Activated CD8-positive, alpha-beta T cell treated with anti-CD3 and anti-CD28 coated beads, Interleukin-2, amount 10 ng/mL, durations not matched to agents 7 days and 5 days (primary cell): ENCODE measurements at regions of chr1 and their contacts with region 1.

Region 1: GRCh38 chr1:77779529-77780281 is at the start of gene MIGA1:
- DNase-seq: peak; percentile 92
- ATAC-seq: peak; percentile 98
- H3K4me3 Mint-ChIP-seq: peak within 1 kb of the TSS; percentile 89
- H3K27ac Mint-ChIP-seq: peak within 1 kb of the TSS; percentile 78
- H3K4me1 Mint-ChIP-seq: peaks cover 34% of the 10 kb centered on the region
- H3K27me3 Mint-ChIP-seq: no peaks in the 10 kb centered on the region
- total RNA-seq, gene MIGA1: 9.9 to 10.7 TPM

Region 2: DNA sequence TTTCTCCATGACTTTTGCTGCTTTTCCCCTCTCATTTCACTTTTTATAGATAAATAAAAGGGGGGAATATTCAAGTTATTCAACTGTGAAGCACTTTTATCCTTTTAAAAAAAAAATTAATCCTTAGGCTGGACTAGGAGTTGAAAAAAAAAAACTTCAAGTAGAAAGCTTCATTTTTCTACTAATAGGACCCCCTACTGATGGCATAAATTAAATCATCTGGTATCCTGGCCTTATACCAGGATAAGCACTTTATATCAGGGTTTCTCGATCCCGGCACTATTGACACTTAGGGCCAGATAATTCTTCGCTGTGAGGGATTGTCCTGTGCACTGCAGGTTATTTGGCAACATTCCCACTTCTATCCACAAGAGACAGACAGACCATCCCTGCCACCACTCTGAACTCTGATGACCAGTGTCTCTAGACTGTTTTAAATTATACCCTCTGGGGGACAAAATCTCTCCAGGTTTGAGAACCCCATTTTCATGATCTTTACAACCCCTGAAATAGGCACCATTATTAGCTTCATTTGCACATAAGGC is 37.6 kb before region 1 on chr1:
- CTCF ChIA-PET with region 1: no interaction called
- POLR2A ChIA-PET with region 1: no interaction called
- DNase-seq: no peak
- ATAC-seq: no peak
- H3K4me3 Mint-ChIP-seq: no peak overlapping the region
- H3K27ac Mint-ChIP-seq: no peak overlapping the region
- H3K4me1 Mint-ChIP-seq: no peaks in the 10 kb centered on the region
- H3K27me3 Mint-ChIP-seq: no peaks in the 10 kb centered on the region

Region 3: DNA sequence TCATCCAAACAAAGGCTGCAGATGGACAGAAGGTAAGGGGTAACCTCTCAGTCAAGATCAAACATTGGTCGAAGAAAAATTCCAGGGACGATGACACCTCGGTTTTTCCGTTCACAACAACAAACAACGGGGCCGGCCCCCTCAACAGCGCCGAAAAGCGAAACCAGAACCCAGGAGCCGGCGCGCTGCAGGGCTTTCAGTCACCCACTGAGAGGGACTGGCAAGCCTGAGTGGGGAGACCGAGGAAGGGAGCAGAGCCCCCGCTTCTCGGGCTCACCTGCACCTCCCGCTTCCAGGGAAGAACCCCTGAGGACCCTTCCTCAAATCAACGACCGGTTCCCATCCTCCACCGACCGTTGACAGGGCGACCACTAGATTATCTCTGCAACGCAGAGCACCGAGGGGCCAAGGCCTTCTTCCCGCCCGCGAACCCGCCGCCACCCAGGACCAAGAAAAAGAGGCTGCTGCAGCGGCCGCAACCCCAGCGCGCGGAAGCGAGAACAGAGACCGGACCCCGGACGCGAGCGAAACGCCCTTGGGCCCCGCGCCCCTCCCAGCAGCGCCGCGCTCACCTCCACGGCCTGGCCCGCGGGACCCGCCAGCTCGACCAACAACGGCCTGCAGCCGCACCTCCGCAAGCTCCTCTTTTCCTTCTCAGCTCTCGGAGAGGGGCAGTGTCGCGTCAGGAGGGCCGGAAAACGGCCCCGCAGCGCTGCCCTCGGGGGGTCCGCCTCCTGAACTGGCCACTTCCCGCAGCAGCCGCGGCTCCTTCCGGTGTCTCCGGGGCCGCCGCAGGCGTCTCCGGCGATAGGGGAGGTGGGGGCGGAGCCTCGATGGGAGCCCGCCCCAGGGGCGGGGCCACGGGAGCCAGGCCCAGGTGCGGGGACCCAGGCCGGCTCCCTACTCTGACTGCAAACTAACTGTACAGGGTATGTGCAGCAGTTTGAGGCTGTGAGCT is 20.4 kb before region 1 on chr1 and contains the start of gene USP33:
- CTCF ChIA-PET with region 1: interaction called, 4 read pairs
- POLR2A ChIA-PET with region 1: interaction called, 15 read pairs
- DNase-seq: peak; percentile 91
- ATAC-seq: peak; percentile 90
- H3K4me3 Mint-ChIP-seq: peak within 1 kb of the TSS; percentile 95
- H3K27ac Mint-ChIP-seq: peak within 1 kb of the TSS; percentile 96
- H3K4me1 Mint-ChIP-seq: peaks cover 30% of the 10 kb centered on the region
- H3K27me3 Mint-ChIP-seq: no peaks in the 10 kb centered on the region
- total RNA-seq, gene USP33: 45.7 to 56.6 TPM

Region 4: GRCh38 chr1:77794550-77794949 is 14.8 kb after region 1 on chr1:
- CTCF ChIA-PET with region 1: no interaction called
- POLR2A ChIA-PET with region 1: no interaction called
- DNase-seq: no peak
- ATAC-seq: no peak
- H3K4me3 Mint-ChIP-seq: no peak overlapping the region
- H3K27ac Mint-ChIP-seq: no peak overlapping the region
- H3K4me1 Mint-ChIP-seq: peaks cover 5% of the 10 kb centered on the region
- H3K27me3 Mint-ChIP-seq: no peaks in the 10 kb centered on the region

Region 5: DNA sequence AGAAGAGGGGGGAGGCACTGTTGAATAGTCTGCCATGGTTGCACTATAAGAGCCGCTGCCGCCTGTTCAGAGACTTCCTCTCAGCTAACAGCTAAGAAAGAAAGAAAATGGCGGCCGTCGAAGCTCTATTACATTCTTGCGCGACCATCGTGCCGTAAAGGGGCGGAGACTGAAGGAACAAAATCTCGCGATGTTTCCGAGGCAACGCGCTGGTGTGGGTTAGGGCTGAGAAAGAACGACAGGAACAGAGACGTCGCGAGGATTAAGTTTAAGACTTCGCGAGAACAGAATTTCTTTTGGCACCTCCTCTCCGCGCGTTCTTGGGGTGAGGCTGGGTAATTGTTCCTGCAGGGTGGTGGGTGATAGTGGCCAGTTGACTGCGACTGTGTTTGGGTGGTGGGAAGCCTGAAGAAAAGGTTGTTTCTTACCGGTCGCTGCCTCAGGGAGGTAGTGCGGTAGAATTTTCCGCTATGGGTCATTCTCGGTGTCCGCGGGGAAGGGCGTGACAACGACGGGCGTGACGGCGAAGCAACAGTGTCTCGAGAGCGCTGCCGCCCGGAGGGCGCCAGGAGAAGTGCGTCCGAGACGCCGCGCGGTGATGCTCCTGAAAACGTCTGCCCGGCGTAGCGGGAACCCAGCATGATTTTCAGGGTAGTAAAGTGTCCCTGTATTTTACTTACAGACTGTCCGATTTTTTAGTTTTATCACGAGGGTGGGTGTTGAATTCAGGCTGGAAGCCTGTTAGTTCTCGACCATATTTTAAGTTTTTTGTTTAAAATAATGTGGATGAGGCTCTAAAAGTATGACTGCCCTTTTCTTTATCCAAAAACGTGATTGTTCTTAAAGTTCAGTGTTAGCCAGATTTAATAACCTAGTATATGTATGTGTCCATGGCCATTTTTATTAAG is 199.5 kb after region 1 on chr1 and contains the start of gene FUBP1:
- CTCF ChIA-PET with region 1: no interaction called
- POLR2A ChIA-PET with region 1: interaction called, 10 read pairs
- DNase-seq: peak; percentile 98
- ATAC-seq: peak; percentile 84
- H3K4me3 Mint-ChIP-seq: no peak within 1 kb of the TSS
- H3K27ac Mint-ChIP-seq: no peak within 1 kb of the TSS
- H3K4me1 Mint-ChIP-seq: peaks cover 45% of the 10 kb centered on the region
- H3K27me3 Mint-ChIP-seq: no peaks in the 10 kb centered on the region
- total RNA-seq, gene FUBP1: 195 to 197 TPM